Body of pancreas (tissue), 4 donors: ENCODE measurements at regions of chr6 and their contacts with region 1.

Region 1: DNA sequence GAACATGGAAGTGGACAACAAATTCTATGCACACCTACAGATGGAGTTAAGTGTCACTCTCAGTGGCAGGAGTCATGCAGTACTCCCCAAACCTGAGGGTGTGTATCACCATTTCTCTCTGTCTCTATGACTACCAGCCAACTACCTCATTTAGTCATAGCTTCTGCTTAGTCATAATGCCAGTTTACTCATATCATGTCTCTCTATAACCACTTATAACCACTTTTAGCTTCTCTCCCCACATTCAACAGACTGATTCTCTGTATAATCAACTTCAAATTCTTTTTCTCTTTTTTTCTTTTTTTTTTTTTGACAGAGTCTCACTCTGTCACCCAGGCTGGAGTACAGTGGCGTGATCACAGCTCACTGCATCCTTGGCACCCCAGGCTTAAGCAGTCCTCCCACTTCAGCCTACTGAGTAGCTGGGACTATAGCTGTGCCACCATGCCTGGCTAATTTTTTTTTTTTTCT is 13.8 kb upstream of the GTF3C6 start:
- DNase-seq: no peak
- ATAC-seq: no peak
- H3K4me3 ChIP-seq: no peak overlapping the region
- H3K27ac ChIP-seq: no peak overlapping the region
- H3K4me1 ChIP-seq: no peaks in the 10 kb centered on the region
- H3K27me3 ChIP-seq: no peaks in the 10 kb centered on the region
- CTCF ChIP-seq: no peak
- POLR2A ChIP-seq: no peak

Region 2: GRCh38 chr6:110534731-110535492 is 409.8 kb before region 1 on chr6:
- intact Hi-C with region 1: loop called (anchors 5 kb)
- DNase-seq: no peak
- ATAC-seq: no peak
- H3K4me3 ChIP-seq: no peak overlapping the region
- H3K27ac ChIP-seq: no peak overlapping the region
- H3K4me1 ChIP-seq: no peaks in the 10 kb centered on the region
- H3K27me3 ChIP-seq: no peaks in the 10 kb centered on the region
- CTCF ChIP-seq: no peak
- POLR2A ChIP-seq: no peak